ENCODE measurements at regions of chr10 and their contacts with region 1.

Region 1: GRCh38 chr10:72126184-72126871 is 38.0 kb upstream of the SPOCK2 start:
- H3K4me3 ChIP-seq: no peak overlapping the region
- H3K27ac ChIP-seq: no peak overlapping the region
- H3K4me1 ChIP-seq: peaks cover 9% of the 10 kb centered on the region
- CTCF ChIP-seq: peak; percentile 45; the same call in 1 of the 2 replicates

Region 2: GRCh38 chr10:72108830-72109631 is 17.3 kb before region 1 on chr10:
- CTCF ChIA-PET with region 1: interaction called, 10 read pairs
- POLR2A ChIA-PET with region 1: no interaction called
- H3K4me3 ChIP-seq: no peak overlapping the region
- H3K27ac ChIP-seq: no peak overlapping the region
- H3K4me1 ChIP-seq: peaks cover 13% of the 10 kb centered on the region
- CTCF ChIP-seq: no peak

Region 3: GRCh38 chr10:72114706-72115450 is 11.4 kb before region 1 on chr10:
- CTCF ChIA-PET with region 1: interaction called, 26 read pairs
- POLR2A ChIA-PET with region 1: no interaction called
- H3K4me3 ChIP-seq: no peak overlapping the region
- H3K27ac ChIP-seq: no peak overlapping the region
- H3K4me1 ChIP-seq: peaks cover 3% of the 10 kb centered on the region; the same call in 1 of the 2 replicates
- CTCF ChIP-seq: no peak

Region 4: GRCh38 chr10:72140174-72140573 is 13.8 kb after region 1 on chr10:
- CTCF ChIA-PET with region 1: interaction called, 28 read pairs
- POLR2A ChIA-PET with region 1: no interaction called
- H3K4me3 ChIP-seq: no peak overlapping the region
- H3K27ac ChIP-seq: no peak overlapping the region
- H3K4me1 ChIP-seq: peaks cover 8% of the 10 kb centered on the region
- CTCF ChIP-seq: no peak

Region 5: DNA sequence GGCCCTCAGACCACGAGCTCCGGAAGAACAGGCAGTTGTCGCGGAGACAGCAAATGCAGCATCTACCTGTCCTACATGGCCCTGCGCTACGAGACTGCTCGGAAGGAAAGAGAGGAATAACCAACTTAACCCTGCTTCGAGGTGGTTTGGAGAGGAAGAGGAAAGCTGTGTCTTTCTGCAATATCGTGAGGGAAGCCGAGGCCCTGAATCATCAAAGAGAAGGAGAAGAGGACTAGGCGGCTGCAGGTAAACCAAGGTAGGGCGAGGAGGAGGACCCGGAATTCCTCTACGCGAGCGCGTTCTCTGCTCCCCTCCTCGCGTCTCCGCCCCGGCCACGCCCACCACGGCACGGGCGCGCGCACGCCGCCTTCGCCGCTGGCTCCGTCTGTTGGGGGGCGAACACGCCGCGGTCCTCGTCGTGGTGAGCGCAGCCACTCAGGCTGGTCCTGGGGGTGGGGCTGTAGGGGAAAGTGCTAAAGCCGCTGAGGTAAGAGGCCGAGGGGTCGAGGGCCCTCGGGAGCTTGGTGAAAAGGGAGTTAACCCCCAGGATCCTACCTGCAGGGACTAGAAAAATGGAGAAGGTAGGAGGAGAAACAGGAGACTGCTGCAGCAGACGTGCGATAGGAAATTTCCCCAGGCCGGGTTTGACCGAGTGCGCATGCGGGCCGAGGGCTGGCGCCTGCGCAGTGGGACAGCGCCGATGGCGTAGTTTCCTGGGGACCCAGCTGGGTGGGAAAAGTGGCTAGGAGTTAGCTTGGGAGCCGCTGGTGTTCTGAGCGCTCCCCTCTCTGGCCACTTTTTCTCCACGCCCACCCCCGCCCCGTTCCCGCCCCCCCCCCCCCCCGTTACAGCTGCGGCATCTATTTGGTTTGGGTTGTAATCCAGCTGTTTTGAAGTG is 89.6 kb after region 1 on chr10 and contains the starts of genes ANAPC16 and ASCC1:
- CTCF ChIA-PET with region 1: interaction called, 12 read pairs
- POLR2A ChIA-PET with region 1: interaction called, 3 read pairs
- H3K4me3 ChIP-seq: peak within 1 kb of the TSS; percentile 72
- H3K27ac ChIP-seq: peak within 1 kb of the TSS; percentile 91
- H3K4me1 ChIP-seq: peaks cover 7% of the 10 kb centered on the region
- CTCF ChIP-seq: 0 out of 2 replicates have a peak, but pooled peaks have one; percentile 14

Region 6: DNA sequence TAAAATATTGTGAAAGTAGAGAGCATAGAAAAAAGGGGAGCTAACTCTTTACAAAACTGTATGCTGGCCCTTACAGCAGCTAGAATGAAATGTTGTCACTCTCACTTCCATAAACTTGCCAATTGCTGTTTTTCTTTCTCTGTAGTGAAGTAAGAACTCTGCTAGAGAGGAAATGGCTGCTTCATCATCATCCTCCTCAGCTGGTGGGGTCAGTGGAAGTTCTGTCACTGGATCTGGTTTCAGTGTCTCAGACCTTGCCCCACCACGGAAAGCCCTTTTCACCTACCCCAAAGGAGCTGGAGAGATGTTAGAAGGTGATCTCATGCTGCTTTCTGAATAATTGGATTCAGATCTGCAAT is 97.4 kb after region 1 on chr10:
- CTCF ChIA-PET with region 1: interaction called, 15 read pairs
- POLR2A ChIA-PET with region 1: interaction called, 3 read pairs
- H3K4me3 ChIP-seq: no peak overlapping the region
- H3K27ac ChIP-seq: no peak overlapping the region
- H3K4me1 ChIP-seq: peaks cover 10% of the 10 kb centered on the region
- CTCF ChIP-seq: no peak

Region 7: DNA sequence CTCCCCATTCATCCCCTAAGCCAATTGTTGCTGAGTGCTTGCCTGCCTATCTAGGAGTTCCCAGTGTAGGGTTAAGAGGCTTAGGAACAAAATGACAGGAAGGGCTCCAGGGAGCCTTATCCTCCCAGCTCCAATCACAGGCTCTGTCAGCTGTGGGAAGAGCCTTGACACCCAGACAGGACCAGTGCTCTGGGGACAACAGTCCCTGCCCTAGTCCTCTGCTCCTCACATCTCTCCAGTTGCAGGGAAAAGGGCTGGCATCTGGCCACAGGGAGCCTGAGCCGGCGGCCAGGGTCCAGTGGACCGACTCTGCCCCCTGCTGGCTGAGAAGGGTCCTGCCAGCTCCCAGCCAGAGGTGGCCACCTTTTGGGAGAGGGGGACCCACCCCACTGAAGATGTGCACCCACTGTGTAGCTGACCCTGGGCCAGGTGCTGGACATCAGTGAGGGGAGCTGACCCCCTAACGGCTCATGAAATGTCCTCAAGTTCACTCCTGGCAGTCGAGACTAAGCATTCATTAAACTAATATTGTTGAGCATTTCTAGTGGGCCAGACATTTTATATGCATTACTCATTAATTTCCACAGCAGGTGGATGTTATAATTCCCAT is 210.8 kb after region 1 on chr10:
- CTCF ChIA-PET with region 1: interaction called, 31 read pairs
- POLR2A ChIA-PET with region 1: no interaction called
- H3K4me3 ChIP-seq: no peak overlapping the region
- H3K27ac ChIP-seq: no peak overlapping the region
- H3K4me1 ChIP-seq: peaks cover 14% of the 10 kb centered on the region
- CTCF ChIP-seq: peak; percentile 94

Region 8: GRCh38 chr10:72435570-72435969 is 309.2 kb after region 1 on chr10:
- CTCF ChIA-PET with region 1: no interaction called
- POLR2A ChIA-PET with region 1: no interaction called
- H3K4me3 ChIP-seq: no peak overlapping the region
- H3K27ac ChIP-seq: no peak overlapping the region
- H3K4me1 ChIP-seq: no peaks in the 10 kb centered on the region
- CTCF ChIP-seq: no peak

Measured in HEK293 (cell line).